Activated CD4-positive, alpha-beta memory T cell treated with anti-CD3 and anti-CD28 coated beads, Interleukin-2, amount 10 ng/mL, durations not matched to agents 7 days and 5 days (primary cell): ENCODE measurements at regions of chr14 and their contacts with region 1.

Region 1: DNA sequence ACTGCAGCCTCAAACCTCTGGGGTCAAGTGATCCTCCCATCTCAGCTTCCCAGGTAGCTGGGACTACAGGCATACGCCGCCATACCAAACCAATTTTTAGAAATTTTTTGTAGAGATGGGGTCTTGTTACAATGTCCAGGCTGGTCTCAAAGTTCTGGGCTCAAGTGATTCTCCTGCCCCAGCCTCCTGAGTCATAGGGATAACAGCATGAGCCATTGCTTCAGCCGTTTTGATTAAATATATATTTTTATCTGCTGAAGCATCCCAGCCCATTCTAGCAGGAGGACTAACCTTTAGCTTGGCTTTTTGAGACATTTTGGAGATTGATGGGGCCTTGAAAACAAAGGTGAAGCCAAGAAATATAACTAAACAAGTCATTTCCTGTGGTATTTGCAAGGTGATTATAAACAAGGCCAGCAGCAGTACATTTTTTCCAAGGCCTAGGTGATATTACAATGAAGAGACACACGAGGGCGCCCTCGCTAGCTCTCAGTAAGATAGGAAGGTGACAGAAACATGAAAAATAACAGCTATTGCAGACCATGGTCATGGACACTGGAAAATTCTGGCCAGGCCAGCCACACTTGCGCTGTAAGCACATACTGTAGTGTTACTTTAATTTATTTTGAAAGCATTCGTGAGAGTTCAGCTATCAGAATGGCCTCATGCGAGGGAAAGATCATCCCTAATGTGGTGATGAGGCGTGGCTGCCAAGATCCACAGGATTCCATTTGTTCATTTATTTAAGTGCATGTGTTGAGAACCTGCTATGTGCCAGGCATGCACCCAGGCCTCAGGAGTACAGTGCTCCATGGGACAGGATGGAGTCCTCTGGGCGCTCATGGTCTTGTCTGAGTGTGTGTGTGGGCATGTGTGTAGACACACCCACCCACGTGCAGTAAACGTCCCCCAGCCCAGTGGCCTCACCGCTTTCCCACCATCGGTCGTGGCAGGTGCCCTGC is 63.5 kb downstream of the DGLUCY start:
- DNase-seq: peak; percentile 79
- H3K4me3 Mint-ChIP-seq: no peak overlapping the region
- H3K27ac Mint-ChIP-seq: peak overlapping the region; percentile 77
- H3K4me1 Mint-ChIP-seq: peaks cover 25% of the 10 kb centered on the region
- H3K27me3 Mint-ChIP-seq: no peaks in the 10 kb centered on the region

Region 2: GRCh38 chr14:90894241-90894640 is 283.1 kb before region 1 on chr14:
- CTCF ChIA-PET with region 1: interaction called, 13 read pairs
- POLR2A ChIA-PET with region 1: no interaction called
- DNase-seq: no peak
- H3K4me3 Mint-ChIP-seq: no peak overlapping the region
- H3K27ac Mint-ChIP-seq: no peak overlapping the region
- H3K4me1 Mint-ChIP-seq: peaks cover 2% of the 10 kb centered on the region
- H3K27me3 Mint-ChIP-seq: no peaks in the 10 kb centered on the region

Region 3: DNA sequence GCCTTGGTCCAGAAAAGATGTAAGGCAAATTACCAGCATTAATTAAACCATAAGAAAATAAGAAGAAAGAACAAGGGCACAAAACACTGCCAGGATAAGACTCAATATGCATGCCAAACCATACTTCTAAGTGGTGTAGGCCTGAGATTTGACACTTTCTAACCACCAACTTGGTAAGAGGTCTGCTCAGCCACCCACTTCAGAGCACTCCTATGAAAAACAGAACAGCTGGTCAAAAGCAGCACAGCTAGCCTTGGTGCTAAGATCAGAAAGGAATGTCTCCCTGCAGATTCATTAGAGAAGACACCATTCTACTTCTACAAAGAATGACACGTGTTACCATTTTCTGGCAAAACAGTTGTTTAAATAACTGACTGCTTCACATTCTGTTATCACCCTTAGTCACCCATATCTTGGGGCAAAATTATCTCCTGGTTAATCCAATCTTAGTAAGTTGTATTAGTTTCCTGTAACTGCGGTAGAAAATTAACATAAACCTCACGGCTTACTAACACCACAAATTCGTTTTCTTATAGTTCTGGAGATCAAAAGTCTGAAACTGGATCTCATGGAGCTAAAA is 130.1 kb before region 1 on chr14:
- CTCF ChIA-PET with region 1: interaction called, 12 read pairs
- POLR2A ChIA-PET with region 1: no interaction called
- DNase-seq: no peak
- H3K4me3 Mint-ChIP-seq: no peak overlapping the region
- H3K27ac Mint-ChIP-seq: peak overlapping the region; percentile 16
- H3K4me1 Mint-ChIP-seq: peaks cover 52% of the 10 kb centered on the region
- H3K27me3 Mint-ChIP-seq: no peaks in the 10 kb centered on the region

Region 4: GRCh38 chr14:91138511-91139359 is 38.6 kb before region 1 on chr14:
- CTCF ChIA-PET with region 1: interaction called, 23 read pairs
- POLR2A ChIA-PET with region 1: interaction called, 5 read pairs
- DNase-seq: peak; percentile 59
- H3K4me3 Mint-ChIP-seq: no peak overlapping the region
- H3K27ac Mint-ChIP-seq: peak overlapping the region; percentile 41
- H3K4me1 Mint-ChIP-seq: peaks cover 59% of the 10 kb centered on the region
- H3K27me3 Mint-ChIP-seq: no peaks in the 10 kb centered on the region

Region 5: GRCh38 chr14:91228112-91229004 is 51.0 kb after region 1 on chr14:
- CTCF ChIA-PET with region 1: interaction called, 11 read pairs
- POLR2A ChIA-PET with region 1: interaction called, 22 read pairs
- DNase-seq: peak; percentile 88
- H3K4me3 Mint-ChIP-seq: peak overlapping the region; percentile 62
- H3K27ac Mint-ChIP-seq: peak overlapping the region; percentile 100
- H3K4me1 Mint-ChIP-seq: peaks cover 91% of the 10 kb centered on the region
- H3K27me3 Mint-ChIP-seq: no peaks in the 10 kb centered on the region

Region 6: DNA sequence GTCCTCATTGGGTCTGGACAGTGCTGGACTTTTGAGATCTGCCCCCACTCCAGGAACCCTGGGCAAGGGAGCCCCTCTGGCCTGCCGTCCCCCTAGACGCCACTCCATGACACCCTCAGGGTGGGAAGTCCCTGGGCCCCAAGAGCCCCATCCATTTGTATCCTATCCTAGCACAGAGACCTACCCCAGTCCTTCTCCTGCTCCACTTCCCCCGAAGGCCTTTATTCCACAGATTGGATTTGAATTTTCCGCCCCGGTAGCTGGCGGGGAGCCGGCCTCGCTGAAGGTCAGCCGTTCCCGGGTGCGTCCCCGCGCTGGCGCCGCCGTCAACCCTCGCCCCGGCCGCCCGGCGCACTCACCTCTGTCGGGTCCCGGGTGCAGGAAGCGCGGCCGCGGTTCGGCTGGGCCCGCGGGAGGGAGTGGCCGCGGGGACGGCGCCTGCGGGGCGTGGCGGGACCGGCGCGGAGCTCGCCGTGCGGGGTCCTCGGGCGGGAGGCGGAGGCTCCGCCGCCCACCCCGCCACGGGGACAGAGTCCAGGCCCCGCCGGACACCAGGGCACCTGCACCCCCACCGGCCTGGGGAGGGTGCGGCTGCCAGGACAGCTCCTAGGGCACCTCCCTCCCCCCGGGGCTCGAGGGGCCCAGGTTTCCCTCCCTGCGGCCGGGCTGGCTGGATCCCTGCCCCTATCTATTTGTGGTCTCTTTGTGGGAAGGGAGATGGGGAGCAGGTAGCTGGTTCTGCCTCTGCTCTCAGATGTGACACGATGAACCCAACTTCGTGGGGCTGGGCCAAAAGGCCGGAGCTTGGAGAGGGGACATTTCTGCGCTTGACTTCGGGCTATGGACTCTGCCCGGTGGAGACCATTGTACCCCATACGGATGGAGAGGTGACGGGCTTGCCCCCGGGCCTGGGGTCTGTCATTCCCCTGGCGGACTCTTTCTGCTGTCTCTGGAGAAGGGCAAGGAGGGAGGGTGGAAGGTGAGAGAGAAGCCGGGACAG is 87.1 kb after region 1 on chr14:
- CTCF ChIA-PET with region 1: interaction called, 39 read pairs
- POLR2A ChIA-PET with region 1: interaction called, 7 read pairs
- DNase-seq: peak; percentile 50
- H3K4me3 Mint-ChIP-seq: peak overlapping the region; percentile 68
- H3K27ac Mint-ChIP-seq: no peak overlapping the region
- H3K4me1 Mint-ChIP-seq: peaks cover 63% of the 10 kb centered on the region
- H3K27me3 Mint-ChIP-seq: no peaks in the 10 kb centered on the region

Region 7: DNA sequence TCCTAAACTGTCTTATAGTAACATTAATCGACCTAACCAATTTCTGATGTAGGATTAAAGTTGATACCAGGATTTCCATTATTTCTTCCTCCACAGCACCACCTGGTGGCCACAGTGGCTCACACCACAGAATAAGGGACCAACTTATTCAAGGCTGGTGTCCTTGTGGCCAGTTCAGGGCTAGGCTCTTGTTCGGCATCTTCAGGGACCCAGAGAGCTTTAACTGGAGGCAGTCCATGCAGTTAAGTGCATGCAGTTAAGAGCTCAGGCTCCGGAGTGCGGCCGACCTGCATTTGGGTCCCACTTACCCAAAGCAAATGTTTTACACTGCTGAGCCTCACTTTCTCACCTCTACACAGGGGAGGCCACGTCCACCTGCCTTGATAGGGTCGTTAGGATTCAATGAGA is 109.2 kb after region 1 on chr14:
- CTCF ChIA-PET with region 1: interaction called, 136 read pairs
- POLR2A ChIA-PET with region 1: interaction called, 20 read pairs
- DNase-seq: peak; percentile 85
- H3K4me3 Mint-ChIP-seq: no peak overlapping the region
- H3K27ac Mint-ChIP-seq: peak overlapping the region; percentile 59
- H3K4me1 Mint-ChIP-seq: peaks cover 17% of the 10 kb centered on the region
- H3K27me3 Mint-ChIP-seq: no peaks in the 10 kb centered on the region

Region 8: DNA sequence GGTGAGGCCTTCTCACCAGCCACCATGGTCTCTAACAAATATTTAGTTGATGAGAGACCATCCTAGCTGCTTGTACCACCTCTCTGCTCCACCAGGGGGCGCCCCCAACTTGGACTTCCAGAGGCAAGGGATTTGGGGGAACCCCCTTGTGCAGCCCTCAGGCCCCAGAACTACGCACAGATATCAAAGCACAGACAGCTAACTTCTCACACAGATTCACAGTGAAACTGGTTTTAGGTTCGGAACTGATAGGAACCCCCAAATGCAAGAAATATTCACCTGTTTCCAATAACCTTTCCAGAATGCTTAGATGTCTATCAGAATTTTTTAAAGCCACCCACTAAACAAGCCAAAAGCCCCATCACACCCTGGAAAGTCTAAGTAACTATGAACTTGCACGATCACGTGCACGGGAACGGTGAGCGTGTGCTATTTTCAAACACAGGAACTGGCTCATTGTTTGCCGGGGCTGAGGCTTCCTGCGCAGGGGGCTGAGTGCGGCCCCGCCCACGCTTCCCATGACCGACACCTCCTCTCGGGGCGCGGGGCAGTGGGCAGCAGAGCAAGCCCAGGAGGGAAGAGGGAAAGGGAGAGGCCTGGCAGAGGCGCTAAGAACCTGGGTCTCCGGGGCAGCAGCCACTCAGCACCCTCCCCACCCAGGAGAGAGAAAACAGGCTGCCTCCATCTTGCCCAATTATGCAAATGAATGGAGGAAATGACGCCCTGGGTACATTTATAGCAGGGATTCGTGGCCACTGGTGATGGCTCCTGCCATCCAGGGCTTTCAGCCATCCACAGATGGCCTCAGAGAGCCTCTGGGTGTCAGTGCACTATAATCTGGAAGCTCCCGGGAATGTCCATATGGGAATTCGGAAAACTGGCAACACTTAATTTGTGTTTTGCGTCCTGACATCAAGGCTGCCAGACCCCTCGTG is 146.6 kb after region 1 on chr14:
- CTCF ChIA-PET with region 1: no interaction called
- POLR2A ChIA-PET with region 1: no interaction called
- DNase-seq: peak; percentile 92
- H3K4me3 Mint-ChIP-seq: peak overlapping the region; percentile 76
- H3K27ac Mint-ChIP-seq: peak overlapping the region; percentile 99
- H3K4me1 Mint-ChIP-seq: peaks cover 64% of the 10 kb centered on the region
- H3K27me3 Mint-ChIP-seq: no peaks in the 10 kb centered on the region